A673 (cell line): ENCODE measurements at regions of chr11 and their contacts with region 1.

Region 1: GRCh38 chr11:35822815-35823495 is 120.9 kb upstream of the LDLRAD3 start:
- DNase-seq: peak; percentile 59
- H3K4me3 ChIP-seq: no peak overlapping the region
- H3K27ac ChIP-seq: no peak overlapping the region
- H3K4me1 ChIP-seq: peaks cover 13% of the 10 kb centered on the region
- H3K27me3 ChIP-seq: no peaks in the 10 kb centered on the region
- CTCF ChIP-seq: no peak

Region 2: GRCh38 chr11:35662649-35663407 is 160.1 kb before region 1 on chr11 and contains the start of gene TRIM44:
- CTCF ChIA-PET with region 1: interaction called, 3 read pairs
- POLR2A ChIA-PET with region 1: no interaction called
- intact Hi-C with region 1: loop called (anchors 5 kb)
- DNase-seq: peak; percentile 98
- H3K4me3 ChIP-seq: peak within 1 kb of the TSS; percentile 57
- H3K27ac ChIP-seq: peak within 1 kb of the TSS; percentile 91
- H3K4me1 ChIP-seq: peaks cover 20% of the 10 kb centered on the region
- H3K27me3 ChIP-seq: no peaks in the 10 kb centered on the region
- CTCF ChIP-seq: no peak
- total RNA-seq, gene TRIM44: 179 and 191 TPM in 2 replicates

Region 3: GRCh38 chr11:35811775-35812174 is 11.2 kb before region 1 on chr11:
- CTCF ChIA-PET with region 1: interaction called, 15 read pairs
- POLR2A ChIA-PET with region 1: no interaction called
- intact Hi-C with region 1: no loop called
- DNase-seq: no peak
- H3K4me3 ChIP-seq: no peak overlapping the region
- H3K27ac ChIP-seq: no peak overlapping the region
- H3K4me1 ChIP-seq: no peaks in the 10 kb centered on the region
- H3K27me3 ChIP-seq: no peaks in the 10 kb centered on the region
- CTCF ChIP-seq: no peak

Region 4: DNA sequence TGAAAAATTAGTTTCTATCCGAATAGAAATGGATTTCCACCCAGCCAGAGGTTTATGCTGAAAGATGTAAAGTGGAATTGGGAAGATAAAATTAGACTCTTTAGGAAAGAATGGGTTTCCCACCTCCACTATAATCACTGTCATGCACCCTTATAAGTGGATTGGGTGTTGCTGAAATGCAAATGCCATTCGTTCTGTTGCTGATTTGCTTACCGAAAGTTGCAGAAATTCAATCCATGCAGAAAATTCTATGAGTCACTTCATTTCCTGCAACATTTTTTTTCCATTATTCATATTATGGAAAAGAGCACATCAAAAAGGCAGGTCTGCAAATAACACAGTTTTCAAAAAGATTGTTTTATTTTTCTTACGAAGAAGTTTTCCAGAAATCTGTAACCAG is 186.5 kb after region 1 on chr11:
- CTCF ChIA-PET with region 1: no interaction called
- POLR2A ChIA-PET with region 1: no interaction called
- intact Hi-C with region 1: loop called (anchors 5 kb)
- DNase-seq: peak; percentile 76
- H3K4me3 ChIP-seq: no peak overlapping the region
- H3K27ac ChIP-seq: no peak overlapping the region
- H3K4me1 ChIP-seq: peaks cover 15% of the 10 kb centered on the region
- H3K27me3 ChIP-seq: no peaks in the 10 kb centered on the region
- CTCF ChIP-seq: no peak

Region 5: GRCh38 chr11:36149538-36150242 is 326.7 kb after region 1 on chr11:
- CTCF ChIA-PET with region 1: interaction called, 11 read pairs
- POLR2A ChIA-PET with region 1: no interaction called
- intact Hi-C with region 1: no loop called
- DNase-seq: peak; percentile 97
- H3K4me3 ChIP-seq: no peak overlapping the region
- H3K27ac ChIP-seq: no peak overlapping the region
- H3K4me1 ChIP-seq: peaks cover 10% of the 10 kb centered on the region
- H3K27me3 ChIP-seq: no peaks in the 10 kb centered on the region
- CTCF ChIP-seq: peak; percentile 76

Region 6: GRCh38 chr11:36376888-36377758 is 554.2 kb after region 1 on chr11:
- CTCF ChIA-PET with region 1: interaction called, 11 read pairs
- POLR2A ChIA-PET with region 1: no interaction called
- intact Hi-C with region 1: no loop called
- DNase-seq: peak; percentile 91
- H3K4me3 ChIP-seq: peak overlapping the region; percentile 57
- H3K27ac ChIP-seq: peak overlapping the region; percentile 47
- H3K4me1 ChIP-seq: peaks cover 72% of the 10 kb centered on the region
- H3K27me3 ChIP-seq: no peaks in the 10 kb centered on the region
- CTCF ChIP-seq: peak; percentile 99

Region 7: GRCh38 chr11:36777311-36777710 is 954.4 kb after region 1 on chr11:
- CTCF ChIA-PET with region 1: no interaction called
- POLR2A ChIA-PET with region 1: no interaction called
- intact Hi-C with region 1: no loop called
- DNase-seq: no peak
- H3K4me3 ChIP-seq: no peak overlapping the region
- H3K27ac ChIP-seq: no peak overlapping the region
- H3K4me1 ChIP-seq: peaks cover 5% of the 10 kb centered on the region
- H3K27me3 ChIP-seq: no peaks in the 10 kb centered on the region
- CTCF ChIP-seq: no peak